ENCODE measurements at regions of chr20 and their contacts with region 1.

Region 1: GRCh38 chr20:41693136-41693979 is 75.2 kb upstream of the CHD6 start:
- DNase-seq: peak; percentile 78 to 84
- ATAC-seq: peak; percentile 91 to 94
- H3K4me3 ChIP-seq: peak overlapping the region; percentile 77 to 92 (median 78)
- H3K27ac ChIP-seq: peak overlapping the region; percentile 83 to 97 (median 91)
- H3K4me1 ChIP-seq: peaks cover 10 to 15% of the 10 kb centered on the region in 2 donors
- H3K27me3 ChIP-seq: no peaks in the 10 kb centered on the region
- CTCF ChIP-seq: peak in 4 of 5 experiments; percentile 22 to 68 (median 58)
- POLR2A ChIP-seq: peak; percentile 68 to 69

Region 2: GRCh38 chr20:41028348-41029148 is 664.8 kb before region 1 on chr20 and contains the start of gene TOP1:
- in situ Hi-C with region 1: no loop called
- intact Hi-C with region 1: loop called (anchors 10 kb)
- DNase-seq: peak; percentile 99 to 100
- ATAC-seq: peak; percentile 94 to 95
- H3K4me3 ChIP-seq: peak within 1 kb of the TSS; percentile 75 to 99 (median 96)
- H3K27ac ChIP-seq: peak within 1 kb of the TSS; percentile 93 to 99 (median 98)
- H3K4me1 ChIP-seq: peaks cover 41 to 45% of the 10 kb centered on the region in 2 donors
- H3K27me3 ChIP-seq: no peaks in the 10 kb centered on the region
- CTCF ChIP-seq: peak in 1 of 5 experiments; percentile 13
- POLR2A ChIP-seq: peak; percentile 98
- total RNA-seq, gene TOP1: 9.4 to 13.6 (median 12.2) TPM

Region 3: DNA sequence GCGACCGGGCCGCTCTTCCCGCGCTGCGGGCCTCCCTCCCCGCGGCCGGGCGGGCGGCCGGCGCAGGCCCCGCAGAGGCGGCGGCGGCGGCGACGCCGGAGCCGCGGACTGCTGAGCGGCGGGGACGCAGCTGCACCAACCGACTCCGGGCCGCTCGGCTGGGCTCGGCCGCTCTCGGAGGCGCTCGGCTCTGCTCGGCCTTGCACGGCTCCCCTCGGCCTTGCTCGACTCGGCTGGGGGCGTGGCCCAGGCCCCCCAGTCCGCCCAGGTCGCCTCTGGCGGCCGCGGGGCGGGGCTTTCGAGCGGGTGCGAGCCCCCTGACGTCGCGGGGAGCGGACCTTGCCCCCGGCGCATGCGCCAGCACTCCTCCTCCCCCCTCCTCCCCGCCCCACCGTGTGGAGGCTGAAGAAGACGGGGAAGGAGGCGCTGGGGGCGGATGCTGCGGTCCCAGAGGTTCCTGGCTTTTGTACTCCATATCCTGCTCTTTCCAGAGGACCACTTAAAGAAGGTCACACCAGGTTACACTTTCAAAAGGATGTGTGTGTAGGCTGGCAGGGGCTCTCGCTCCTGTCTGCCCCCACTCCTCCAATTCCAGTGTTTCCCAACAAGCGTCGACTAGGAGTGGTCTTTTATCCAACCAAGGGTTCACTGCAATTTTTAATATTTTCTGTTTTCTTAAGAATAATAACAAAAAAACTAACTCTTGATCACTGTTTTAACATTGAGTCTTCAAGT is 375.7 kb before region 1 on chr20 and contains the start of gene ZHX3:
- in situ Hi-C with region 1: no loop called
- intact Hi-C with region 1: loop called (anchors 10 kb)
- DNase-seq: peak; percentile 92 to 95
- ATAC-seq: peak; percentile 89
- H3K4me3 ChIP-seq: peak within 1 kb of the TSS; percentile 77 to 95 (median 80)
- H3K27ac ChIP-seq: peak within 1 kb of the TSS; percentile 84 to 96 (median 91)
- H3K4me1 ChIP-seq: peaks cover 37 to 40% of the 10 kb centered on the region in 2 donors
- H3K27me3 ChIP-seq: no peaks in the 10 kb centered on the region
- CTCF ChIP-seq: no peak
- POLR2A ChIP-seq: peak; percentile 70 to 85
- total RNA-seq, gene ZHX3: 20.1 to 30.0 (median 25.9) TPM

Region 4: DNA sequence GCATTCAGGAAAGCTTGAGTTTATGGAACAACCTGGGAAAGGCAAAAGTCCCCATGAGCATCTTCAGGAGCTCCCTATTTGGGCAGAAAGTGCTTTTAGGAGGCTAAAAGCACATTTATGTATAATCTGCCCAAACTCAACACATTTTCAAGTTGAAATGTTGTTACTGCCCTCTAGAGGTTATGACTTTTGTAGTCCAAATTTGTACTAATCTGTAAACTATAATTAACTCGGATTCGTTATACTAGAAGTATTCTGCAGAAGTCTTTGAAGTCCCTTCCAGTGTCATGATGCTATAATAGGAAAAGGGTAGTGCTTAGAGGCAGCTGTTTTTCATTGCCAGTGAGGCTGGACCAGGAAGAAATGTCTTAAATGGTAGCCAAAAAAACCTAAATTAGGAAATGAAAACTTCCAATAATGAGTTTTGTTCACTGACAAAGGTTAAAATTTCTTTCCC is 281.9 kb before region 1 on chr20:
- in situ Hi-C with region 1: no loop called
- intact Hi-C with region 1: loop called (anchors 10 kb)
- DNase-seq: no peak
- ATAC-seq: peak; percentile 55 to 78
- H3K4me3 ChIP-seq: no peak overlapping the region
- H3K27ac ChIP-seq: peak overlapping the region; percentile 65 to 81 (median 70)
- H3K4me1 ChIP-seq: peaks cover 49 to 65% of the 10 kb centered on the region in 2 donors
- H3K27me3 ChIP-seq: no peaks in the 10 kb centered on the region
- CTCF ChIP-seq: peak in 2 of 5 experiments; percentile 55 to 61
- POLR2A ChIP-seq: no peak

Region 5: GRCh38 chr20:41453010-41453950 is 240.1 kb before region 1 on chr20:
- in situ Hi-C with region 1: no loop called
- intact Hi-C with region 1: loop called (anchors 10 kb)
- DNase-seq: peak; percentile 65 to 71
- ATAC-seq: peak; percentile 82 to 83
- H3K4me3 ChIP-seq: peak overlapping the region in 1 of 4 donors; percentile 2
- H3K27ac ChIP-seq: peak overlapping the region; percentile 74 to 85 (median 80)
- H3K4me1 ChIP-seq: peaks cover 25 to 44% of the 10 kb centered on the region in 2 donors
- H3K27me3 ChIP-seq: no peaks in the 10 kb centered on the region
- CTCF ChIP-seq: no peak
- POLR2A ChIP-seq: no peak

Region 6: GRCh38 chr20:41509316-41510200 is 183.8 kb before region 1 on chr20:
- in situ Hi-C with region 1: no loop called
- intact Hi-C with region 1: loop called (anchors 5 kb)
- DNase-seq: peak; percentile 73 to 80
- ATAC-seq: peak; percentile 97 to 99
- H3K4me3 ChIP-seq: no peak overlapping the region
- H3K27ac ChIP-seq: peak overlapping the region; percentile 27 to 66 (median 58)
- H3K4me1 ChIP-seq: peaks cover 48 to 55% of the 10 kb centered on the region in 2 donors
- H3K27me3 ChIP-seq: no peaks in the 10 kb centered on the region
- CTCF ChIP-seq: no peak
- POLR2A ChIP-seq: no peak

Region 7: DNA sequence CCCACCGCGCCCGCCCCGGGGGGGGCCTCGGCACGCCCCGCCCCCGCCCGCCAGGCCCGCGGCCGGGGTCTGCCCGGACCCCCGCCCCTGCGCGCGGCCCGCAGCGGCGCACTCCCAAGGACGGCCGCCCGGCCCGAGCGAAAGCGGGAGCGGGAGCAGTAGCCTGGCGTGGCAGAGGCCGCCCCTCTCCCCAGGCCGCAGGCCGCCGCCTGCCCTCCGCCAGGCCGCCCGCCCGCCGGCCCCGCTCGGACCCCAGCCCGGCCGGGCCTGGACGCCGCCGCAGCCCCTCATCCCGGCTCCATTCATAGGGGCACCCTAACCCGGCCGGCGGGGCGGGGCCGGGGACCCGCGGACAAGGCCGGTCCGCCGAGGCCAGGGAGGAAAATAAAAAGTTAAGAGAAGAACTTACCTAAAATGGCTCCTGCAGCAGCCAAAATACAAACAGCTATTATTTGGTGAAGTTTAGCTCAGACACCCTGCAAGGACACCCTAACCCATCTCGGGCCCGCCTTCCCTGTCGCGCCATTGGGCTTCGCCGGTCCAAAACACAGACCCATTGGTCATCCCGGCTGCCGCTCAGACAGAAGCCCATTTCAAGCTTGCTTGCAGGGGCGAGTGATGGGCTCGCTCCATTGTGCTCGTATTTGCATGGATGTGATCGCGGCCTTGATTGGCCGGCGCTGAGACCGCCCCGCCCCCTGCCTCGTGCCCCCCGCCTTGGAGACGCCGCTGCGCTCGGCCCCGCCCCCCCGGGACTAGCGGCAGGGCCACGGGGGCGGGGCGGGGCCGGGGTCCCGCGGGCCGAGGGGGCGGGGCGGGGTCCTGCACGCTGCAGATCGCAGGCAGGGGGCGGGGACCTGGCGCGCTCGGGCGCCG is 75.2 kb before region 1 on chr20 and contains the start of gene CHD6:
- in situ Hi-C with region 1: no loop called
- intact Hi-C with region 1: loop called (anchors 1 kb)
- DNase-seq: peak; percentile 99
- ATAC-seq: peak; percentile 98
- H3K4me3 ChIP-seq: peak within 1 kb of the TSS; percentile 70 to 86 (median 81)
- H3K27ac ChIP-seq: peak within 1 kb of the TSS; percentile 65 to 93 (median 86)
- H3K4me1 ChIP-seq: peaks cover 33 to 38% of the 10 kb centered on the region in 2 donors
- H3K27me3 ChIP-seq: no peaks in the 10 kb centered on the region
- CTCF ChIP-seq: no peak
- POLR2A ChIP-seq: peak in 1 of 2 donors; percentile 45
- total RNA-seq, gene CHD6: 12.8 to 33.7 (median 19.2) TPM

Region 8: GRCh38 chr20:41664350-41664983 is 28.9 kb before region 1 on chr20:
- in situ Hi-C with region 1: no loop called
- intact Hi-C with region 1: no loop called
- DNase-seq: no peak
- ATAC-seq: no peak
- H3K4me3 ChIP-seq: no peak overlapping the region
- H3K27ac ChIP-seq: no peak overlapping the region
- H3K4me1 ChIP-seq: no peaks in the 10 kb centered on the region
- H3K27me3 ChIP-seq: no peaks in the 10 kb centered on the region
- CTCF ChIP-seq: no peak
- POLR2A ChIP-seq: no peak